Activated naive CD4-positive, alpha-beta T cell treated with anti-CD3 and anti-CD28 coated beads, Interleukin-2, amount 10 ng/mL, durations not matched to agents 7 days and 5 days (primary cell): ENCODE measurements at regions of chr1 and their contacts with region 1.

Region 1: GRCh38 chr1:70487910-70488665 is 77.0 kb downstream of the CTH start:
- DNase-seq: peak; percentile 23
- H3K4me3 Mint-ChIP-seq: no peak overlapping the region
- H3K27ac Mint-ChIP-seq: no peak overlapping the region
- H3K4me1 Mint-ChIP-seq: no peaks in the 10 kb centered on the region
- H3K27me3 Mint-ChIP-seq: peaks cover 14% of the 10 kb centered on the region

Region 2: GRCh38 chr1:70134148-70134547 is 353.9 kb before region 1 on chr1:
- CTCF ChIA-PET with region 1: interaction called, 11 read pairs
- DNase-seq: no peak
- H3K4me3 Mint-ChIP-seq: no peak overlapping the region
- H3K27ac Mint-ChIP-seq: no peak overlapping the region
- H3K4me1 Mint-ChIP-seq: peaks cover 3% of the 10 kb centered on the region
- H3K27me3 Mint-ChIP-seq: peaks cover 7% of the 10 kb centered on the region